Activated B cell treated with CpG ODN at 0.5 μM for 24 hours (primary cell): ENCODE measurements at regions of chr16 and their contacts with region 1.

Region 1: DNA sequence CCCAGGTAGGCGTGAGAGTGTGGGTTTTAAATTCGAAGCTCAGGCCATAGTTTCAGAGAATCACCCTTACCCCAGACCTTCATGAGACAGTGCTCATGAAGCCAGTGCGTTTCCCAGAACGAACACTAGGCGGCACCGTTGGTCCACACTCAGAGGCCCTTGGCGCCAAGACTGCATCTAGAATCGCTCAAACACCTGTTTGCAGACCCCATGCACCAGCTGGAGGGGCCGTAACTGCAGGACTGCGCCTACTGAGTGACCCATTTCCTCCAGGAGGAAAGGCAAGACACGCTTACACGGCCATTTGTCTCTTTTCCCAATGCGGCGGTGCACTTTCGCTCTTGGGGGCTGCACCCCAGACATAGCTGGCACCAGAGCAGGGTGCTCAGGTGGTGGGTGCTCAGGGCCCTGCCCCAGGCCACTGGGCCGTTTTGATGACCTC is 34.0 kb downstream of the ADGRG5 start:
- DNase-seq: peak; percentile 74
- ATAC-seq: peak; percentile 98
- H3K4me3 Mint-ChIP-seq: no peak overlapping the region
- H3K27ac Mint-ChIP-seq: peak overlapping the region; percentile 35
- H3K4me1 Mint-ChIP-seq: peaks cover 12% of the 10 kb centered on the region
- H3K27me3 Mint-ChIP-seq: no peaks in the 10 kb centered on the region
- CTCF ChIP-seq: peak; percentile 80

Region 2: DNA sequence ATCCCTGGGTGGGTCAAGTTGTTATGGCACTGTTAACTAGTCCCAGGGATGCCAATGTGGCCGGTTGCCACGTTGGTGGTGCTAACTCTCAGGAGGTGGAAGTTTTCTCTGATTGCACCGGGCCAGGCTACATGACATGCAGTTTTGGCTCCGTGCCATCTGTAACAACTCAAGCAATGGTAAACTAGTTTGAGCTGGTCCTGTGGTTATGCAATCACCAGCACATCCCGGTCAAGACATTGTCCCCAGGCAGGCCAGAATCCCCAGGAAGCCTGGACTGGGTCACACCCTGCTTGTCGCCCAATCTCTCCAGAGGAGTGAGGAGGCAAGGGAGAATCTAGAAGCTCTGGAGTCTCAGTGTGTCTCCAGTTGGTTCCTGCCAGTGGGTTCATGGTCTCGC is 182.0 kb before region 1 on chr16:
- CTCF ChIA-PET with region 1: no interaction called
- POLR2A ChIA-PET with region 1: no interaction called
- intact Hi-C with region 1: no loop called
- DNase-seq: no peak
- ATAC-seq: no peak
- H3K4me3 Mint-ChIP-seq: no peak overlapping the region
- H3K27ac Mint-ChIP-seq: no peak overlapping the region
- H3K4me1 Mint-ChIP-seq: peaks cover 13% of the 10 kb centered on the region
- H3K27me3 Mint-ChIP-seq: no peaks in the 10 kb centered on the region
- CTCF ChIP-seq: no peak

Region 3: GRCh38 chr16:57475711-57476339 is 100.6 kb before region 1 on chr16:
- CTCF ChIA-PET with region 1: no interaction called
- POLR2A ChIA-PET with region 1: no interaction called
- intact Hi-C with region 1: loop called (anchors 2 kb)
- DNase-seq: peak; percentile 69
- ATAC-seq: peak; percentile 92
- H3K4me3 Mint-ChIP-seq: no peak overlapping the region
- H3K27ac Mint-ChIP-seq: no peak overlapping the region
- H3K4me1 Mint-ChIP-seq: peaks cover 40% of the 10 kb centered on the region
- H3K27me3 Mint-ChIP-seq: peaks cover 7% of the 10 kb centered on the region
- CTCF ChIP-seq: peak; percentile 51

Region 4: GRCh38 chr16:57535680-57536305 is 40.7 kb before region 1 on chr16:
- CTCF ChIA-PET with region 1: interaction called, 5 read pairs
- POLR2A ChIA-PET with region 1: interaction called, 11 read pairs
- intact Hi-C with region 1: loop called (anchors 1 kb)
- DNase-seq: peak; percentile 87
- ATAC-seq: peak; percentile 70
- H3K4me3 Mint-ChIP-seq: peak overlapping the region; percentile 85
- H3K27ac Mint-ChIP-seq: peak overlapping the region; percentile 89
- H3K4me1 Mint-ChIP-seq: peaks cover 83% of the 10 kb centered on the region
- H3K27me3 Mint-ChIP-seq: no peaks in the 10 kb centered on the region
- CTCF ChIP-seq: no peak

Region 5: DNA sequence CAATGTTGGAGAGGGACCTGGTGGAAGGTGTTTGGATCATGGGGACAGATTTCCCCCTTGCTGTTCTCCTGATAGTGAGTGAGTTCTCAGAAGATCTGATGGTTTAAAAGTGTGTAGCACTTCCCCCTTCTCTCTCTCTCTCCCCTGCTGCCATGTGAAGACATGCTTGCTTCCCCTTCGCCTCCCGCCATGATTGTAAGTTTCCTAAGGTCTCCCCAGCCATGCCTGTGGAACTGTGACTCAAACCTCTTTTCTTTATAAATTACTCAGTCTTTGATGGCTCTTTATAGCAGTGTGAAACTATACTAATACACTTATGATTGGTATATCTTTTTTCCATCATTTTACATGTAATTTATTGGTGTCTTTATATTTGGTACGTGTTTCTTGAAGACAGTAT is 20.6 kb before region 1 on chr16:
- CTCF ChIA-PET with region 1: interaction called, 6 read pairs
- POLR2A ChIA-PET with region 1: no interaction called
- intact Hi-C with region 1: loop called (anchors 2 kb)
- DNase-seq: no peak
- ATAC-seq: no peak
- H3K4me3 Mint-ChIP-seq: no peak overlapping the region
- H3K27ac Mint-ChIP-seq: peak overlapping the region; percentile 43
- H3K4me1 Mint-ChIP-seq: peaks cover 68% of the 10 kb centered on the region
- H3K27me3 Mint-ChIP-seq: no peaks in the 10 kb centered on the region
- CTCF ChIP-seq: no peak

Region 6: GRCh38 chr16:57648590-57649442 is 72.4 kb after region 1 on chr16:
- CTCF ChIA-PET with region 1: interaction called, 20 read pairs
- POLR2A ChIA-PET with region 1: interaction called, 3 read pairs
- intact Hi-C with region 1: loop called (anchors 1 kb)
- DNase-seq: peak; percentile 67
- ATAC-seq: peak; percentile 87
- H3K4me3 Mint-ChIP-seq: no peak overlapping the region
- H3K27ac Mint-ChIP-seq: no peak overlapping the region
- H3K4me1 Mint-ChIP-seq: peaks cover 25% of the 10 kb centered on the region
- H3K27me3 Mint-ChIP-seq: peaks cover 2% of the 10 kb centered on the region
- CTCF ChIP-seq: peak; percentile 85

Region 7: DNA sequence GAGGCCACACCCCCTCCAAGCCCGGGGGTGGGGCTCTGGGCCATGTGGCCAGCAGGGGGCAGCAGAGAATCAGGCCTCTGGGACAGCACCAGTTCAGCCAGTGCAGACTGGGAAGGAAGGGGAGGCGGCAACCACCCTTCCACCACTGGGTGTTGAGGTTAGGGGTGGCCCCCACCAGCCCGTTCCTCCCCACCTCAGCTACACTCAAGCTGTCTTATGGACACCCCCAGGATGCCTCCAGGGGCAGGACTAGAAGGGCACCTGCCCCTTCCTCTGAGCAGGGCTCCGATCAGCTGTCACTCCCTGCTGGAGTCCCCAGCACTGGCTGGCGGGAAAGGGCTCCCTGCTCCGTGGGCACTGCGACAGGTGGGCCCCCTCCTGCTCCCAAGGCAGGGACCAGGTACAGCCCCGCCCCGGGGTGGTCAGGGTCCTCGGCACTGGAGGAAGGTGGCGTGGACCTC is 180.9 kb after region 1 on chr16:
- CTCF ChIA-PET with region 1: no interaction called
- POLR2A ChIA-PET with region 1: no interaction called
- intact Hi-C with region 1: loop called (anchors 1 kb)
- DNase-seq: peak; percentile 78
- ATAC-seq: peak; percentile 99
- H3K4me3 Mint-ChIP-seq: no peak overlapping the region
- H3K27ac Mint-ChIP-seq: no peak overlapping the region
- H3K4me1 Mint-ChIP-seq: no peaks in the 10 kb centered on the region
- H3K27me3 Mint-ChIP-seq: no peaks in the 10 kb centered on the region
- CTCF ChIP-seq: no peak

Region 8: DNA sequence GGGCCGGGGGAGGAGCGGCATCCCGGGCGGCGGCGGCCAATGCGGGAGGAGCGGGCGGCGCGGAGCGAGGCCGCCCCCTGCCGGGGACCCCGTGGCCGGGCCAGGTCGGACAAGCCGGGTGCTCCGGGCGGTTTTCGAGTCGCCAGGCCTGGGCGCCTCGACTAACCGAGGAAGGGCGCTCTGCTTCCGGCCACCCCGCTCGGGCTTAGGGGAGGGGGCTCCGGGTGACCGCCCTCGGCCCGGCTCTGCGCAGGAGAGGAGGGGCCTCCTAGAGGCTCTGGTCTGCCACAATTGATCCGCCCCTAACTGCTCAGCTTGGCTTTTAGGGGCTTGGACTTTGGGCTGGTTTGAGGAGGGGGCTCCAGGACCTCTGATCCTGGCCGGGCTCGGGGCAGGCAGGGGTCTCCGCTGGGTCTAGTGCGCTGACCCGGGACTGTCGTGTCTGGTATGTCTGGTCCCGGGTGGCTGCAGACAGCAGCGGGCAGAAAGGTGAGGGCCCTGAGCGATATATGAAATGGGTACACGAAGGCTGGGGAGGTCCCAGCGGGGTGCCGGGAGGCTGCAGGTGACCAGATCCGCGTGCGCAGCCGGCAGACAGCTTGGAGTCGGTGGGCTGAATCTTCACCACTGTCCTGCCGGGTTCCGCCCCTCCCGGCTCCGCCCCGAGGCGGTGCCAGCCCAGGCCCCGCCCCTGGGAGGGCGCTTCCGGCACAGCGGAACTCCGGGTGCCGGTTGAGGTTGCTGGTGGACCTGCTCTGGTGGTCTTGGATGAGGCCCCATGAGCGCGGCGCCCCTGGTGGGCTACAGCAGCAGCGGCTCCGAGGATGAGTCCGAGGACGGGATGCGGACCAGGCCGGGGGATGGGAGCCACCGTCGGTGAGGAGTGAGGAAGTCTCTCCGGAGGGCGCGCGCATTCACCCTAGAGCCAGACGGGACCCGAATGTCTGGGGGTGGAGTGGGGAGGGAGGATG is 424.5 kb after region 1 on chr16 and contains the start of gene USB1:
- CTCF ChIA-PET with region 1: interaction called, 4 read pairs
- POLR2A ChIA-PET with region 1: no interaction called
- intact Hi-C with region 1: loop called (anchors 1 kb)
- DNase-seq: peak; percentile 97
- ATAC-seq: peak; percentile 84
- H3K4me3 Mint-ChIP-seq: peak within 1 kb of the TSS; percentile 94
- H3K27ac Mint-ChIP-seq: peak within 1 kb of the TSS; percentile 92
- H3K4me1 Mint-ChIP-seq: peaks cover 42% of the 10 kb centered on the region
- H3K27me3 Mint-ChIP-seq: no peaks in the 10 kb centered on the region
- CTCF ChIP-seq: no peak
- total RNA-seq, gene USB1: 37.4 and 40.7 TPM in 2 replicates